GM13976 (cell line): ENCODE measurements at regions of chr5 and their contacts with region 1.

Region 1: GRCh38 chr5:163564321-163564938 is 59.0 kb downstream of the MAT2B start:
- DNase-seq: peak; percentile 56
- CTCF ChIP-seq: peak; percentile 79

Region 2: DNA sequence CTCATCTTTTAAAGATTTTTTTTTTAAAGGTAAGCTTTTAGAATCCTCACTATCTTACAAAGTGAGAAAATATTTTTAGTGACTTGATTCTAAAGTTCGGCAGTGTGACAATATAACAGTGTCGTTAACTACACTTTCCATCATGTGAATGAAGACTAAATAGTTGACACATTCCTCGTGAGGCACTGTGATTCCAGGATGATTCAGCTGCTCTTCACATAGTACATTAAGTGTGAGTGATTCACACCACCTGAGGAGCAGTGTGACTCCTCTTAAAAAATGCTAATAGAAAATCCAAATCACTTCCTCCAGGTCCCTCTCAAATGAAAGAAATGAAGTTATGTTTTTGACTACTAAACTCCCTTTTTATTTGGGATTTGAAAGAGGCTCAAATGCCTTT is 907.4 kb before region 1 on chr5:
- in situ Hi-C with region 1: no loop called
- DNase-seq: no peak
- CTCF ChIP-seq: no peak

Region 3: GRCh38 chr5:163330723-163331668 is 233.4 kb before region 1 on chr5:
- in situ Hi-C with region 1: no loop called
- DNase-seq: no peak
- CTCF ChIP-seq: no peak

Region 4: GRCh38 chr5:163670036-163670435 is 105.6 kb after region 1 on chr5:
- in situ Hi-C with region 1: no loop called
- DNase-seq: no peak
- CTCF ChIP-seq: no peak

Region 5: DNA sequence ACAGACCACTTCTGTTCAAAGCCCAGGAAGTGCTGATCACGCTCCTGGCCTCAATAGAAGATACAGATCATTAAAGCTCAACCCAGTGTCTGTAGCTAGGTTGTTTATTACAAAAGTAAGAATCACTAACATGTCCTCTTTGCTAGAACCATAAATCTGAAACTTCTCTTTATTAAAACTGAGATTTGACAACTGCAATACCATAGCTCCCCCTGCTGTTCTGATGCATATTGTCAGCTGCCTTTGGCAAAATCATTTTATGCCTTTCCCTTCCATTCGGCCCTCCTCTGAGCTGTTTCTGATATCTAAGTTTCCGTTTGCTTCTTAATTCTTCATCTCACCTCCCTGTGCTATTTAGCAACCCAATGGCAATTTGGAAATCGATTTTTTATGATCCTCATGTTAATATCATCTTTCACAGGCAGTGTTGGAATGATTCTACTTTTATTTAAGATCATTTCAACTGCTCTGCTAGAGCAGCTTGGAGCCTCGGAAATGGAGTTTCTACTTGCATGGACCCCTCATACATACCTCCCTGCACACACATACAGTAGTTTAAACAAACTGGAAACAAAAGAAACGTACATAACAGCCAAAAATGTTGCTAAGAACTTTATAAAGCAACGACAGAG is 939.8 kb after region 1 on chr5:
- in situ Hi-C with region 1: loop called (anchors 25 kb)
- DNase-seq: peak; percentile 26
- CTCF ChIP-seq: peak; percentile 59